IMR-90 (cell line): ENCODE measurements at regions of chrX and their contacts with region 1.

Region 1: GRCh38 chrX:103845165-103845653 is 13.2 kb upstream of the RAB9B start:
- DNase-seq: peak; percentile 78
- ATAC-seq: peak; percentile 95
- H3K4me3 ChIP-seq: no peak overlapping the region
- H3K27ac ChIP-seq: no peak overlapping the region
- H3K4me1 ChIP-seq: peaks cover 2% of the 10 kb centered on the region; the same call in 1 of the 2 replicates
- H3K27me3 ChIP-seq: peaks cover 2% of the 10 kb centered on the region
- CTCF ChIP-seq: peak; percentile 69
- POLR2A ChIP-seq: no peak
- RAD21 ChIP-seq: peak; percentile 68

Region 2: GRCh38 chrX:103258275-103258674 is 586.9 kb before region 1 on chrX:
- CTCF ChIA-PET with region 1: no interaction called
- POLR2A ChIA-PET with region 1: no interaction called
- dilution Hi-C with region 1: no loop called
- in situ Hi-C with region 1: no loop called
- intact Hi-C with region 1: no loop called
- DNase-seq: no peak
- ATAC-seq: no peak
- H3K4me3 ChIP-seq: no peak overlapping the region
- H3K27ac ChIP-seq: no peak overlapping the region
- H3K4me1 ChIP-seq: no peaks in the 10 kb centered on the region
- H3K27me3 ChIP-seq: peaks cover 12% of the 10 kb centered on the region
- CTCF ChIP-seq: no peak
- POLR2A ChIP-seq: no peak
- RAD21 ChIP-seq: no peak

Region 3: DNA sequence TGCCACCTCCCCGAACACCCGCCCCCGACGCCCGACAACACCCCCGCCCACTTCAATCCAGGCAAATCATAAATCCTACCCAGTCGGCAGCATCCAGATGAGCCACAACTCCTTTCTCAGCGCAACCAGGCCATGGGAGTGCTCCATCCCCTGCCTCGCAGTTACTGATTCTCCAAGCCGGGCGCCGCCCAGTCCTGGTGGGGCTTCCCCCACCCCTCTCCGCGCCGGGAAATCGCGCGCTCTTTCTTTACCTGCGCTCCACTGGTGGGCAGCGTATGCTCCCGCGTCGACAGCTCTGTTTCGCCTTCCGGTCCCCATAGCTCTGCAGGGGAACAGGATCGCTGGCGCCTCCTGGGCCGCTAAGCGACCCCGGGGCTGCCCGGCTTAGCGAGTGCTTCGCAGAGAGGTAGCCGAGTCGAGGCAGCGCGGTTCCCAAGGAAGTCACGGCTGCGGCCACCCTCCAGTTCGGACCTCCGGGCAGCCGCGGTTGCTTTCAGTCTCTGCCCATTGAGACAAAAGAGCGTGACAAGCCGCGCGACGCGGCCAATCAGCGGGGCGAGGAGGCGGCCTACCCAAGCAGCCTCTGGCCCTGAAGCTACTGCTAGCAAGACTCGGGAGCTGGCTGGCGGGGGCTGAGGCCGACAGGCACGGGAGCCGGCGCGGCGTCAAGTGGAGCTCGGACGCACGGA is 73.5 kb after region 1 on chrX:
- CTCF ChIA-PET with region 1: no interaction called
- POLR2A ChIA-PET with region 1: no interaction called
- dilution Hi-C with region 1: no loop called
- in situ Hi-C with region 1: loop called (anchors 5 kb)
- intact Hi-C with region 1: loop called (anchors 1 kb)
- DNase-seq: peak; percentile 59
- ATAC-seq: peak; percentile 88
- H3K4me3 ChIP-seq: peak overlapping the region; percentile 63
- H3K27ac ChIP-seq: peak overlapping the region; percentile 50; the same call in 1 of the 2 replicates
- H3K4me1 ChIP-seq: no peaks in the 10 kb centered on the region
- H3K27me3 ChIP-seq: peaks cover 2% of the 10 kb centered on the region; the same call in 1 of the 2 replicates
- CTCF ChIP-seq: no peak; the same call in 1 of the 2 replicates
- POLR2A ChIP-seq: no peak
- RAD21 ChIP-seq: no peak

Region 4: GRCh38 chrX:103941201-103941975 is 96.2 kb after region 1 on chrX:
- CTCF ChIA-PET with region 1: interaction called, 3 read pairs
- POLR2A ChIA-PET with region 1: no interaction called
- dilution Hi-C with region 1: no loop called
- in situ Hi-C with region 1: no loop called
- intact Hi-C with region 1: loop called (anchors 1 kb)
- DNase-seq: peak; percentile 32
- ATAC-seq: no peak
- H3K4me3 ChIP-seq: no peak overlapping the region
- H3K27ac ChIP-seq: no peak overlapping the region
- H3K4me1 ChIP-seq: no peaks in the 10 kb centered on the region
- H3K27me3 ChIP-seq: no peaks in the 10 kb centered on the region
- CTCF ChIP-seq: peak; percentile 38
- POLR2A ChIP-seq: no peak
- RAD21 ChIP-seq: 0 out of 2 replicates have a peak, but pooled peaks have one; percentile 16

Region 5: GRCh38 chrX:104113222-104113965 is 268.2 kb after region 1 on chrX:
- CTCF ChIA-PET with region 1: no interaction called
- POLR2A ChIA-PET with region 1: no interaction called
- dilution Hi-C with region 1: no loop called
- in situ Hi-C with region 1: loop called (anchors 25 kb)
- intact Hi-C with region 1: no loop called
- DNase-seq: peak; percentile 53
- ATAC-seq: peak; percentile 56
- H3K4me3 ChIP-seq: peak overlapping the region; percentile 96
- H3K27ac ChIP-seq: no peak overlapping the region
- H3K4me1 ChIP-seq: no peaks in the 10 kb centered on the region
- H3K27me3 ChIP-seq: peaks cover 2% of the 10 kb centered on the region; the same call in 1 of the 2 replicates
- CTCF ChIP-seq: peak; percentile 47
- POLR2A ChIP-seq: no peak
- RAD21 ChIP-seq: peak; percentile 33; the same call in 1 of the 2 replicates

Region 6: DNA sequence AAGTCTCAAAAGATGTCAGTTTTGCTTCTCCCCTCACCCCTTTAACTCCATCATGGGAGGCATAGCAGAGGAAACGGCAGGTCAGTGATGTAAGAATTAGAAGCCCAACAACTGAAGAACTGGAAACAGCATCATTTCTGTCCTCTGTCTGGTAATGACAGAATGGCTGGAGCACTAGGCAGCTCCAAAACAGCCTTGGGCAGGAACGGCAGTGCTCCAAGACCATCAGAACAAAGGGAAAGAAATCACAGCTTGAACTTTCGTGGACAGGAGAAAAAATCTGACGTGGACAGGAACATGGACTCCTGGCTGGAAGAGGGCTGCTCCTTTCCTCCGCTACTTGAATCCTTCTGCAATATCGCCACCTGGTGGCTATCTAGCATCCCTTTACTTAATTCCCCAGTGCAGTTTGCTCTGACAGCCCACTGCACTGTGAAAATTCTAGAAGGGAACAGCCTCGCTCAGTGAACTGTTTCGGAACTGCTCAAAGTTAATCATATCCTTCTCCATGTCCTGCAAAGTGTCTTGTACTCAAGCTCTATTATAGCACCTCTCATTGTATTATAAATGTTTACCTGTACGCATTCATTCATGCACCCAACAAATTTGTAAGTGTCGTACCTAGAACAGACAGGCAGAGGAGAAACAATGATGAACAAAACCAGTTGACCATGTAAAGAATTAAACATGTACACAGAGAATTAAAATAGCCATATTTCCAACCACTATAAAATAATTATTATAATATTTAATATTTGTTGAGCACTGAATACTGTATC is 291.2 kb after region 1 on chrX:
- CTCF ChIA-PET with region 1: no interaction called
- POLR2A ChIA-PET with region 1: no interaction called
- dilution Hi-C with region 1: no loop called
- in situ Hi-C with region 1: no loop called
- intact Hi-C with region 1: loop called (anchors 1 kb)
- DNase-seq: peak; percentile 91
- ATAC-seq: peak; percentile 96
- H3K4me3 ChIP-seq: peak overlapping the region; percentile 73
- H3K27ac ChIP-seq: peak overlapping the region; percentile 90
- H3K4me1 ChIP-seq: peaks cover 2% of the 10 kb centered on the region; the same call in 1 of the 2 replicates
- H3K27me3 ChIP-seq: peaks cover 2% of the 10 kb centered on the region; the same call in 1 of the 2 replicates
- CTCF ChIP-seq: peak; percentile 77
- POLR2A ChIP-seq: no peak
- RAD21 ChIP-seq: peak; percentile 78

Region 7: DNA sequence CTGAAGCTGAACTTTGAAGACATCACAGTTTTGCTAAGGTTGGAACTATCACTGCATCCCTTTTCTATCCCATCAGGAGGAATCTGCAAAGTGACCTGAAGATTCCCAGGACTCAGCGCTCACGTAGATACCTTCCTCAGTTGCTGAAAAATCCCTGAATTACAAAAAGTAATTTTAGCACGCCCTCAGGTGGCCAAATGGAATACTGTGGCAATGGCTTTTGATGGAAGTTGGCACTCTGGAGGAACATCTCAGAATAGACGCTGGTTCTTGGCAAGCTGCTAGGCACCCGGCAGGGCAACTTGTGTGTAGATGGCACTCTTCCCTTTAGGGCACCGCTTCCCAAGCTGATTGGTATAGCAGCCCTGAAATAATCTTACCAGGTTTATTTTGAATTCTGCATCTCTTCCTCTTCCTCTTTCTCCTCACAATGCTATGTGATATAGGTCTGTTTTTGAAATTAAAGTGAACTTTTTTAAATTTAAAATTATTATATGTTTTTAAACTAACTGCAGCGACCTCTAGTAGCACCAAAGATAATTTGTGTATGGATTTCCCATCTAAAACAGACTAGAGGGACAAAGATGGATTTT is 425.8 kb after region 1 on chrX:
- CTCF ChIA-PET with region 1: no interaction called
- POLR2A ChIA-PET with region 1: no interaction called
- dilution Hi-C with region 1: no loop called
- in situ Hi-C with region 1: no loop called
- intact Hi-C with region 1: loop called (anchors 10 kb)
- DNase-seq: peak; percentile 22
- ATAC-seq: peak; percentile 42; the same call in 1 of the 2 replicates
- H3K4me3 ChIP-seq: peak overlapping the region; percentile 29; the same call in 1 of the 2 replicates
- H3K27ac ChIP-seq: no peak overlapping the region
- H3K4me1 ChIP-seq: no peaks in the 10 kb centered on the region
- H3K27me3 ChIP-seq: peaks cover 21% of the 10 kb centered on the region
- CTCF ChIP-seq: peak; percentile 62
- POLR2A ChIP-seq: no peak
- RAD21 ChIP-seq: peak; percentile 45